Brain microvascular endothelial cell (primary cell): ENCODE measurements at regions of chr17 and their contacts with region 1.

Region 1: GRCh38 chr17:1783834-1784611 is 22.2 kb downstream of the SERPINF1 start:
- DNase-seq: peak; percentile 29
- H3K4me3 ChIP-seq: no peak overlapping the region
- H3K27ac ChIP-seq: no peak overlapping the region
- H3K27me3 ChIP-seq: no peaks in the 10 kb centered on the region
- CTCF ChIP-seq: peak; percentile 77

Region 2: DNA sequence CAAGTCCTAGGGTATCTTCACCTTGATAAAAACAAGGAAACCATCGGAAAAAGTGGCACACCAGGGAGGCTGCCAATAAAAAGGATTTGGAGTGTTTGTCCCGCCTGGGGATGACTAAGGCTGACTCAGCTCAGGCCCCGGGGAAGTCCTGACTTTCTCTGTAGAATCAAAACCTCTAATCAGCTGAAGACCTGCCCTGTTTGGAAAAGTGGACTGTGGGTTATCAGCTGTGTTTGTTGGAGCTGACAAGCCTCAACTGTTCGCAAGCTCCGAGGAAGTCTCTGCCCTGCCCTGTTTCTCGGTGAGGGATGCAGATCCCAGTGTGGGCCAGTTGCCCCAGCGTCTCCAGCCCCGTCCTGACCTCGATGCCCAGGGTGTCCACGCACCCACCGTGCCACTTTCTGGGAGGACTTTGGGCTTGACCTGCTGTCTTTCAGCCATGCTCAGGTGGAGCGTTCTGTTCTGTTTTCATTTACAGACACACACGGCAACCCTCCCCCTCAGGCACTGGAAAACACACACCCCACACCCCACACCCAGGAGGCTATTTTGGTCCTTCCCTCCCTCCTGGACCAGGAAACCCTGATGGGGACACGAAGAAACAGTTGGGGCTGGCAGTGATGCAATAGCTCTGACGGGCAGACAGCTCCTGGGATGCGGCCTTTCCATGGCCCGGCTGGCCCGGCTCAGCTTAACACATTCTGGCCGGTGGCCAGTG is 193.8 kb before region 1 on chr17:
- in situ Hi-C with region 1: no loop called
- DNase-seq: peak; percentile 83
- H3K4me3 ChIP-seq: no peak overlapping the region
- H3K27ac ChIP-seq: peak overlapping the region; percentile 47
- H3K27me3 ChIP-seq: no peaks in the 10 kb centered on the region
- CTCF ChIP-seq: no peak

Region 3: DNA sequence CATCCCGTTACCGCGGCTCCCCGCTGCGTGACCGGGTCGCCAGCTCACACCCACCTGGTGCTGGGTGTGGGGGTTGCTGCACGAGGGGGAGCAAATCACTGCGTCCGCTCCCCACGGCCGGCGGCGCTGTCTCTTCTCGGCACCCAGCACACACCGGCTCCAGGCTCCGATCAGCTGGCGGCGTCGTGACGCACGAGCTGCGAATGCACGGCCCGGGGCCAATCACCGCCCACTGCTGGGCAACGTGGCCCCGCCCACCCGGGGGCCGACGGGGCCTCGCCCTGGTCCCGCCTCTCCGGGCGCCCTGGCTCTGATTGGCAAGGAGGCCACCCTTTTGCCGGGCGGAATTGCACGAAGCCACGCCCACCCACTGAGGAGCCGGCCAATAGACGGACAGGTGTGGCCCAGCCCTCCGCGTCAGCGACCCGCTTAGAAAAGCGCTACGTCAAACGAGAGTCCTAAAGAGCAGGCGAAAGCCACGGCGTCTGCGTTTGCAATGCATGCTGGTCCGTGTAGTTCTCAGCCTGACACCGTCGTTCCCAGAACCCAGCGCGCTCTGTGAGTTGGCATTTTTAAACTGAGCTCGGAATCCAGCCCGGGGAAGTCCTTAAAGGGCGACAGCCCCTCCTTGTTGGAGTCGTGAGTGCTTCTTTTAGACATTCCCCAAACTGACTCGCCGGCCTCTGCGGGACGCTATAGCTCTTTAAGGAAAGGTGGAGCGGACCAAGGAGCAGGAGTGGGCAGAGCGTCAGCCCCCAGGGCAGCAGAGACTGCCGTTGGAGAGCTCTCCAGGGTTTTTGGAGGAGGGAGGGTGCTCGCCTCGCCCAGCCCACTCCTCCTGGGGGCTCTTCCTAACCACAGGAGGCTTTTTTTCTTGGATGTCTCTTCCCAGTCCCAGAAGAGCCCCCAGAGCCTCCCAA is 67.7 kb before region 1 on chr17:
- in situ Hi-C with region 1: loop called (anchors 10 kb)
- DNase-seq: peak; percentile 100
- H3K4me3 ChIP-seq: peak overlapping the region; percentile 75
- H3K27ac ChIP-seq: peak overlapping the region; percentile 99
- H3K27me3 ChIP-seq: no peaks in the 10 kb centered on the region
- CTCF ChIP-seq: peak; percentile 27